ENCODE measurements at regions of chr7 and their contacts with region 1.

Region 1: DNA sequence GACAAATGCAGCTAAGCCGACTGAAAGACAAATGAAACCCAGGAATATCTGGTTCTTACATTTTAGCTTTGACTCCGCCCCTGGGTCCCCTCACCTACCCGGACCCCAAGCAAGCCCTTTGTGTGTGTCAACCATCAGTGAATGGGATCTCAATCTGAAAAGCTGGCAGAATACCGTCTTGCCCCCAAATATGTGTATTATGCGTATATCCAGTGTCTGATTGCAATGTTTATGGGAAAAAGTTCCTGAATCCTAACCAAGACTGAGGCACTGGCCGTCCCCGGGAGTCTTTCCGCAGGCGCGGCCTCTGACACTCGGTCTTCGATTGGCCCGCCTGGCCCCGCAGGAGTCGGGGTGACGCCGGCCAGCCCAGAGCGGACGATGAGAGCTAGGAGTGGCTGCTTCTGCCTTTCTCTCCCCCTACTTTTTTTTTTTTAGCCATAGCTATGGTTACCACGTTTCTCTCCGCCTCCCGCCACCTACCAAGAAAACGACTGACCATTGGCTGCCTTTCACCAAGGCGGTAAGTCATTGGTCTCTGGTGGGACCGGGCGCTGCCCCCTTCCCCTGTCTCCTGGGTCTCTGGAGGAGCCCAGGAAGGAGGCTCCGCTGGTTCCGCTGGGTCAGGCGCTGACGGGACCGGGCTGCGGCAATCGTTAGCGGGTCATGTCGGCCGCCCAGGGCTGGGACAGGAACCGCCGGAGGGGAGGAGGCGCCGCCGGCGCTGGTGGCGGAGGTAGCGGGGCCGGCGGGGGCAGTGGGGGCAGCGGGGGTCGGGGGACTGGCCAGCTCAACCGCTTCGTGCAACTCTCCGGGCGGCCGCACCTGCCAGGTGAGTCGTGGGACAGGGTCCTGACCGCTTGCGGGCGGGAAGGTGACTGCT is at the start of gene KLHDC10:
- DNase-seq: peak; percentile 98
- ATAC-seq: peak; percentile 87
- H3K4me3 ChIP-seq: peak within 1 kb of the TSS; percentile 89
- H3K27ac ChIP-seq: peak within 1 kb of the TSS; percentile 33
- H3K4me1 ChIP-seq: peaks cover 16% of the 10 kb centered on the region
- H3K27me3 ChIP-seq: no peaks in the 10 kb centered on the region
- CTCF ChIP-seq: no peak
- total RNA-seq, gene KLHDC10: 13.2 and 21.6 TPM in 2 replicates

Region 2: GRCh38 chr7:130154501-130155317 is 84.5 kb after region 1 on chr7:
- CTCF ChIA-PET with region 1: interaction called, 5 read pairs
- POLR2A ChIA-PET with region 1: interaction called, 4 read pairs
- intact Hi-C with region 1: loop called (anchors 5 kb)
- DNase-seq: peak; percentile 19
- ATAC-seq: peak; percentile 35
- H3K4me3 ChIP-seq: no peak overlapping the region
- H3K27ac ChIP-seq: no peak overlapping the region
- H3K4me1 ChIP-seq: no peaks in the 10 kb centered on the region
- H3K27me3 ChIP-seq: no peaks in the 10 kb centered on the region
- CTCF ChIP-seq: peak; percentile 52

Region 3: GRCh38 chr7:130421684-130422083 is 351.5 kb after region 1 on chr7:
- CTCF ChIA-PET with region 1: no interaction called
- POLR2A ChIA-PET with region 1: no interaction called
- intact Hi-C with region 1: loop called (anchors 10 kb)
- DNase-seq: no peak
- ATAC-seq: peak; percentile 42
- H3K4me3 ChIP-seq: no peak overlapping the region
- H3K27ac ChIP-seq: peak overlapping the region; percentile 63
- H3K4me1 ChIP-seq: peaks cover 33% of the 10 kb centered on the region
- H3K27me3 ChIP-seq: no peaks in the 10 kb centered on the region
- CTCF ChIP-seq: no peak

Region 4: GRCh38 chr7:130741331-130741995 is 671.2 kb after region 1 on chr7:
- CTCF ChIA-PET with region 1: interaction called, 3 read pairs
- POLR2A ChIA-PET with region 1: interaction called, 10 read pairs
- intact Hi-C with region 1: no loop called
- DNase-seq: no peak
- ATAC-seq: no peak
- H3K4me3 ChIP-seq: no peak overlapping the region
- H3K27ac ChIP-seq: no peak overlapping the region
- H3K4me1 ChIP-seq: no peaks in the 10 kb centered on the region
- H3K27me3 ChIP-seq: peaks cover 93% of the 10 kb centered on the region
- CTCF ChIP-seq: no peak

Region 5: GRCh38 chr7:130831817-130832481 is 761.7 kb after region 1 on chr7:
- CTCF ChIA-PET with region 1: no interaction called
- POLR2A ChIA-PET with region 1: no interaction called
- intact Hi-C with region 1: loop called (anchors 2 kb)
- DNase-seq: peak; percentile 56
- ATAC-seq: no peak
- H3K4me3 ChIP-seq: no peak overlapping the region
- H3K27ac ChIP-seq: no peak overlapping the region
- H3K4me1 ChIP-seq: peaks cover 7% of the 10 kb centered on the region
- H3K27me3 ChIP-seq: no peaks in the 10 kb centered on the region
- CTCF ChIP-seq: peak; percentile 84